CD4-positive, alpha-beta memory T cell (primary cell): ENCODE measurements at regions of chr1 and their contacts with region 1.

Region 1: DNA sequence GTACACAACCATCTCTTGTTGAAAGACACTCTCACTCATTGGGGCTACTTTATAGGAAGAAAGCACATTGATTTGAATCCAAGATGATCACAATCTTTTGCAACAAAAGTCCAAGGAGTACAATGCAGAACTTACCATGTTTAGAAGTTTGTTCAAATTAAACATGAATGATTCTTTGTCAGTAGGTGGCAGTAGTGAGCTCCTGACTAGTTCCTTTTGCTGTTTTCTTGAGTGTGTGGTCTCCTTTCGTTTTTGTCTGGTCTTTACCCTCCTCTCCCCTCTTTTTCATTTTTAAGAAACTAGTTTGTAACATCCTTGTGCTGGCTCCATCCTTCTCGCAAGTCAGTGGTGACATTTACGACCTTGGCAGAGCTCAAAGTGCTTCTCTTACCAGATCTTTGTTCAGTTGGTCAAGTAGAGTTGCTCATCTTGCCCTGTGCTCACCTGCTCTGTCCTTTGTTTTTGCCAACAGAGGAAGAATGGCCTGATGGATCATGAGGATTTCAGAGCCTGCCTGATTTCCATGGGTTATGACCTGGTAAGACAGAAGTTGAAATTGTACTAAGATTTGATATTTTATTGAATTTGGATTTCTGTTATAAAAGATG is 35.7 kb upstream of the MTR start:
- DNase-seq: peak in 4 of 5 donors; percentile 19 to 40 (median 32)
- H3K4me3 ChIP-seq: no peak overlapping the region
- H3K4me3 Mint-ChIP-seq: peak overlapping the region in 5 of 8 donors; percentile 2 to 56 (median 44)
- H3K27ac ChIP-seq: no peak overlapping the region
- H3K27ac Mint-ChIP-seq: no peak overlapping the region
- H3K4me1 ChIP-seq: no peaks in the 10 kb centered on the region
- H3K4me1 Mint-ChIP-seq: peaks cover 0 to 2% (median under 1%) of the 10 kb centered on the region in 4 donors
- H3K27me3 ChIP-seq: no peaks in the 10 kb centered on the region
- H3K27me3 Mint-ChIP-seq: no peaks in the 10 kb centered on the region

Region 2: GRCh38 chr1:236795035-236795756 is 35.8 kb after region 1 on chr1 and contains the start of gene MTR:
- CTCF ChIA-PET with region 1: interaction called, 11 read pairs
- POLR2A ChIA-PET with region 1: interaction called, 3 read pairs
- intact Hi-C with region 1: no loop called
- DNase-seq: peak; percentile 95 to 98 (median 95)
- H3K4me3 ChIP-seq: peak within 1 kb of the TSS; percentile 83 to 97
- H3K4me3 Mint-ChIP-seq: peak within 1 kb of the TSS; percentile 92 to 98 (median 96)
- H3K27ac ChIP-seq: peak within 1 kb of the TSS; percentile 99
- H3K27ac Mint-ChIP-seq: peak within 1 kb of the TSS; percentile 95 to 99 (median 98)
- H3K4me1 ChIP-seq: peaks cover 39% of the 10 kb centered on the region
- H3K4me1 Mint-ChIP-seq: peaks cover 25 to 49% (median 31%) of the 10 kb centered on the region in 4 donors
- H3K27me3 ChIP-seq: no peaks in the 10 kb centered on the region
- H3K27me3 Mint-ChIP-seq: peaks cover 1 to 5% of the 10 kb centered on the region in 2 donors
- total RNA-seq, gene MTR: 68.4 to 71.0 TPM

Region 3: GRCh38 chr1:236868625-236869467 is 109.5 kb after region 1 on chr1:
- CTCF ChIA-PET with region 1: interaction called, 10 read pairs
- POLR2A ChIA-PET with region 1: no interaction called
- intact Hi-C with region 1: loop called (anchors 1 kb)
- DNase-seq: peak in 4 of 5 donors; percentile 32 to 41 (median 35)
- H3K4me3 ChIP-seq: no peak overlapping the region
- H3K4me3 Mint-ChIP-seq: no peak overlapping the region
- H3K27ac ChIP-seq: no peak overlapping the region
- H3K27ac Mint-ChIP-seq: peak overlapping the region in 2 of 7 donors; percentile 17 to 65
- H3K4me1 ChIP-seq: no peaks in the 10 kb centered on the region
- H3K4me1 Mint-ChIP-seq: peaks cover 0 to 4% (median 0%) of the 10 kb centered on the region in 4 donors
- H3K27me3 ChIP-seq: no peaks in the 10 kb centered on the region
- H3K27me3 Mint-ChIP-seq: no peaks in the 10 kb centered on the region

Region 4: GRCh38 chr1:237386362-237387143 is 627.2 kb after region 1 on chr1:
- CTCF ChIA-PET with region 1: interaction called, 11 read pairs
- POLR2A ChIA-PET with region 1: no interaction called
- intact Hi-C with region 1: no loop called
- DNase-seq: no peak
- H3K4me3 ChIP-seq: no peak overlapping the region
- H3K4me3 Mint-ChIP-seq: no peak overlapping the region
- H3K27ac ChIP-seq: no peak overlapping the region
- H3K27ac Mint-ChIP-seq: no peak overlapping the region
- H3K4me1 ChIP-seq: no peaks in the 10 kb centered on the region
- H3K4me1 Mint-ChIP-seq: no peaks in the 10 kb centered on the region
- H3K27me3 ChIP-seq: no peaks in the 10 kb centered on the region
- H3K27me3 Mint-ChIP-seq: peaks cover 1% of the 10 kb centered on the region in 2 donors

Region 5: GRCh38 chr1:237562242-237562823 is 803.0 kb after region 1 on chr1:
- CTCF ChIA-PET with region 1: interaction called, 16 read pairs
- POLR2A ChIA-PET with region 1: no interaction called
- intact Hi-C with region 1: no loop called
- DNase-seq: peak in 4 of 5 donors; percentile 32 to 46 (median 39)
- H3K4me3 ChIP-seq: no peak overlapping the region
- H3K4me3 Mint-ChIP-seq: no peak overlapping the region
- H3K27ac ChIP-seq: no peak overlapping the region
- H3K27ac Mint-ChIP-seq: no peak overlapping the region
- H3K4me1 ChIP-seq: no peaks in the 10 kb centered on the region
- H3K4me1 Mint-ChIP-seq: peaks cover 0 to 3% (median 0%) of the 10 kb centered on the region in 4 donors
- H3K27me3 ChIP-seq: no peaks in the 10 kb centered on the region
- H3K27me3 Mint-ChIP-seq: peaks cover 0 to 2% of the 10 kb centered on the region in 2 donors